PC-9 (cell line): ENCODE measurements at regions of chr15 and their contacts with region 1.

Region 1: DNA sequence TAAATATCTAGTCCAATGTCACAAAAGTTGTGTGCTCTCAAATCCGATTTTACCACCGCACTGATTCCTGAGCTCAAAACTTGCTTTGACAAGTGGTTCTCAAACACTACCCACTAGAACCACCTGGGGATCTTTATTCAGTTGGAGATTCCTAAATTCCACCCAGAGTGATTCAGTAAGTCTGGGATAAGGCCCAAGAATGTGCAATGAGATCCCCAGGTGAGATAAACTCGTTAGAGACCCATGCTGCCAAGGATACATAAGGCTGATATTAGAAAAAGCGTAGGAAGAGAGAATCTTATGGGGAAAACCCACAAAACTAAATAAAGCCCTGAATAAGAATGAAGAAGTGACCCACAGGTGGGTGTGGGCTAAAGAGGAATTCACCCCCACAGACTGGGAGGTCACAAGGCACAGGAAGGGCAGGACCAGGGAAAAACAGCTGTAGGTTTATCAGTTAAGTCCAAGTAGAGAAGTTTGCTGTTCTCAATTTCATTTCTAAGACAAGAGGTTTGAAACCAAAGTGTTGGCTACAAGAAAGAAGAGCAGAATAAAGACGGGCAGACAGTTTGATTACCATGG is 11.5 kb upstream of the RPS17 start:
- DNase-seq: peak; percentile 41 to 68
- H3K4me3 ChIP-seq: no peak overlapping the region
- H3K27ac ChIP-seq: no peak overlapping the region
- H3K4me1 ChIP-seq: no peaks in the 10 kb centered on the region
- H3K27me3 ChIP-seq: peaks cover 27% of the 10 kb centered on the region; the same call in 1 of the 2 replicates
- CTCF ChIP-seq: no peak

Region 2: GRCh38 chr15:82566690-82567089 is 14.9 kb after region 1 on chr15:
- CTCF ChIA-PET with region 1: interaction called, 16 read pairs
- POLR2A ChIA-PET with region 1: no interaction called
- intact Hi-C with region 1: no loop called
- DNase-seq: no peak
- H3K4me3 ChIP-seq: no peak overlapping the region
- H3K27ac ChIP-seq: no peak overlapping the region
- H3K4me1 ChIP-seq: no peaks in the 10 kb centered on the region
- H3K27me3 ChIP-seq: peaks cover 23% of the 10 kb centered on the region
- CTCF ChIP-seq: no peak

Region 3: DNA sequence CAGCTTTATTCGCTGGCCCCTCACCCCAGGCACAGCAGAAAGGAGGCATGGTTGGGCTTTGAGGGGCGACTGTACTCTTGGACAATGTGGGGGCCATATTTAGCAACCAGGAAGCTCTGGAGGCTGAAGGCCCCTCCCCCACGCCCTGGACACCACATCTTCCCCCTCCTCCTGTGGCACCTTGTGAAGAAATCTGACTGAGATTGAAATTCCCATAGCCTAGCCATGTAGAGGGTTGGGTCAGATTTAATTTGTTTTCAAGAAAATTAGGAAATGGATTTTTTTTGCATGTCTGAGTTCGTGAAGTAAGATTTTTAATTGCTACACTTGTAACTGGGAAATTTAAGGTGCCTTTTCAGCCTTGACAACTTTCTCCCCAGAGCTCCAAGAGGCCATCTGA is 229.6 kb after region 1 on chr15:
- CTCF ChIA-PET with region 1: no interaction called
- POLR2A ChIA-PET with region 1: interaction called, 11 read pairs
- intact Hi-C with region 1: no loop called
- DNase-seq: no peak
- H3K4me3 ChIP-seq: no peak overlapping the region
- H3K27ac ChIP-seq: no peak overlapping the region
- H3K4me1 ChIP-seq: no peaks in the 10 kb centered on the region
- H3K27me3 ChIP-seq: no peaks in the 10 kb centered on the region
- CTCF ChIP-seq: no peak